Endothelial cell of umbilical vein (primary cell): ENCODE measurements at regions of chr15 and their contacts with region 1.

Region 1: DNA sequence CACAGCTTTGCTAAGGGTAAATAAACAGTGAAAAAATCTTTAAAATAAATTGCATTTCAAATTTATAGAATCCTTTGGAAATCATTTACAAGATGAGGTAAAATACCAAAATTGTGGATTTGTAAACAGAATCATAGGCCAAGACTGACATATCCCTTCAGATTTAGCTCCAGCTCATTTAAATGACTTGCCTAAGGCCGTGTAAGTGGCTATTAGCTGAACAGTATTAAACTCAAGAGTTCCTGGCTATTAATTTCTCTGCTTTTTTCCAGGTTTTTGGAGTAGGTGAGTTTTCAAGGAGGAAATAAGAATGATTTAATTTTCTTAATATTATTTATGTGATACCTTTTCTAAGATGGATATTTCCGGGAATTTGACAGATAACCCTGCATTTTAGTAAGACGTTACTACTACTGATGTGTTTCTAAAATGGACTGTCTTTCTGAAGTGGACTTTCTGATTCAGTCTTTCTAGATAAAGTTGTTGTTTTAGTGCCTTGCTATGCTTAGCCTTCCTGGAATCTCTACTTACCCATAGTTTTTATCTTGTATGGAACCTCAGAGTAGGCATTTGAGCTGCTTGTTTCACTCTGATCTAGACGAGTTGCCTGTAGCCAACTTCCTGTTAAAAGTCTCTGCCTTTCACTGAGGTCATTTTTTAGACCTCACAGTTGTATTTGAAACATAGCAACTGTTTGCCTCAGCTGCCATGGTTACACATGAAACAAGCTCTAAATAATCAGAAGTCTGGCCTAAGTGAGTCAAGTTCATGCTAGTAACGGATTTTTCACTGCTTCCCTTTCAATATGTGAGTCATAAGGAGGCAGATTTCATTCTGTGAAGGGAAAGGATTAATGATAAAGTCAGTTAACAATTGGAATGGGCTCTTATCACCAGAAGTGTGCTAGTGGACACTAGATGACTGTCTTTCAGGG is 127.0 kb downstream of the KLHL25 start:
- DNase-seq: peak; percentile 99
- H3K4me3 ChIP-seq: peak overlapping the region in 1 of 3 experiments; percentile 10
- H3K27ac ChIP-seq: peak overlapping the region; percentile 96
- H3K4me1 ChIP-seq: peaks cover 18% of the 10 kb centered on the region
- H3K27me3 ChIP-seq: no peaks in the 10 kb centered on the region
- CTCF ChIP-seq: no peak
- POLR2A ChIP-seq: no peak

Region 2: DNA sequence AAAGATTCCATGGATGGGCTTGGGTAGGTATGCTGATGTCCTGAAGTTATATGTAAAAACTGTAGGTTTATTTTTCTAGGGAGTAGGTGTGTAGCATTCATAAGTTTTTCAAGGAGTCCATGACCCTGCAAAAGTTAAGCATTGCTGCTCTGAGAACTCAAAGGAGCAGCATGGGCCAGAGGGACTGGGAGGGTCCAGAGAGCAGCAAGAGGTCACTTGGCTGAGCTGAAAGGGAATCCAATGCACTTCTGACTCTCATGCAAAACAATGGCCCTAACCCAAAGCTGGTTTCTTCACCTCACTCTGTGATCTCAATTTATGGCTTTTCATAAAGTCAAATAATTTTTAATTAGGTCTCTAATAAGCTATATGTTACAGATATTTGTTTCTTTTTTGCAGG is 1630.5 kb before region 1 on chr15:
- CTCF ChIA-PET with region 1: no interaction called
- POLR2A ChIA-PET with region 1: no interaction called
- dilution Hi-C with region 1: no loop called
- intact Hi-C with region 1: no loop called
- DNase-seq: no peak
- H3K4me3 ChIP-seq: no peak overlapping the region
- H3K27ac ChIP-seq: no peak overlapping the region
- H3K4me1 ChIP-seq: no peaks in the 10 kb centered on the region
- H3K27me3 ChIP-seq: no peaks in the 10 kb centered on the region
- CTCF ChIP-seq: no peak
- POLR2A ChIP-seq: no peak

Region 3: GRCh38 chr15:85582131-85583079 is 85.4 kb before region 1 on chr15:
- CTCF ChIA-PET with region 1: no interaction called
- POLR2A ChIA-PET with region 1: no interaction called
- dilution Hi-C with region 1: no loop called
- intact Hi-C with region 1: loop called (anchors 1 kb)
- DNase-seq: peak; percentile 98
- H3K4me3 ChIP-seq: peak overlapping the region; percentile 20 to 55 (median 33)
- H3K27ac ChIP-seq: peak overlapping the region; percentile 91
- H3K4me1 ChIP-seq: peaks cover 67% of the 10 kb centered on the region
- H3K27me3 ChIP-seq: no peaks in the 10 kb centered on the region
- CTCF ChIP-seq: no peak
- POLR2A ChIP-seq: peak; percentile 78

Region 4: DNA sequence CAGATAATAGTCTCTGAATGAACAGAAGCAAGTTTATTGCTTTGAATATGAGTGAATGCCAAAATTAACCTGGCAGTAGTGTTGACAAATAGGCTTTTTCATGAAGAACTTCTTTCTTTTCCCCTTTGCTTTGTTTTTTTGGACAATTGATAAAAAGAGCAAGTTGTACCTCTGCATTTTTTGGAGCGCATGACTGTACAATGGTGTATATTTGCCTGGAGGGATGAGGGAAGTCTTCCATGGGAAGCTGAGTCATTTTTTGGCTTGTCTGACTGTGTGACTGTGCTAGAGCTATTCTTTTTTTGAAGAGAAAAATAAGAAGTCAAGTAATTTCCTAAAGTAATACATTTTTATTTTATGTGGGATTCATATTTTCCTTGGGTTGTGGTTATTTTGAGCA is 59.9 kb before region 1 on chr15:
- CTCF ChIA-PET with region 1: interaction called, 6 read pairs
- POLR2A ChIA-PET with region 1: no interaction called
- dilution Hi-C with region 1: no loop called
- intact Hi-C with region 1: loop called (anchors 1 kb)
- DNase-seq: peak; percentile 92
- H3K4me3 ChIP-seq: peak overlapping the region in 2 of 3 experiments; percentile 28 to 55
- H3K27ac ChIP-seq: peak overlapping the region; percentile 98
- H3K4me1 ChIP-seq: peaks cover 28% of the 10 kb centered on the region
- H3K27me3 ChIP-seq: no peaks in the 10 kb centered on the region
- CTCF ChIP-seq: no peak
- POLR2A ChIP-seq: no peak

Region 5: DNA sequence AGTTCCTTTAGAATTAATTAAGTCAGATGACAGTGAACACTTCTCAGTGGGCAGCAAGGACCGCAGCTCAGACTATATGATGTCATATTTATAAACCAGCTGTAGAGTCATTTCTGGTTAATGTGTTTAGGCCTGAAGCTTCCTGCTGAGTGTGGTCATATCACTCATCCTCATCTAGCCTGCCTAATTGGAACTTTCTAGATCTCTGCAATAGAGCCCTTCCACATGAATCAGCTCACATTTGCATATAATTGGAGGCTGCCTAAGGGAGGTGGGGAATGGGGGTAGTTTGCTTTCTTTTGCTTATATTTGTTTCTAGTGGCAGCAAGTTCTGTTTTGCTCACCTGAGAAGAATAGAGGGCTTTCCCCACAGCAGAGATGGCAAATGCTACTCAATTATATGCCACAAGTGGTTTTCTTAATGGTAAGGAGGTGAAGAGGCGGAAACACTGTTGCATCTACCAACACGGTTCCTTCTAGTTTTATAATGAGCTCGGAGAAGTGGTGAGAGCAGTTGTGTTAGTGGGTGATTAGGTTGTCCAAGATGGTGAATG is 21.1 kb before region 1 on chr15:
- CTCF ChIA-PET with region 1: interaction called, 10 read pairs
- POLR2A ChIA-PET with region 1: no interaction called
- dilution Hi-C with region 1: no loop called
- intact Hi-C with region 1: no loop called
- DNase-seq: peak; percentile 12
- H3K4me3 ChIP-seq: no peak overlapping the region
- H3K27ac ChIP-seq: no peak overlapping the region
- H3K4me1 ChIP-seq: peaks cover 13% of the 10 kb centered on the region
- H3K27me3 ChIP-seq: no peaks in the 10 kb centered on the region
- CTCF ChIP-seq: no peak
- POLR2A ChIP-seq: no peak

Region 6: GRCh38 chr15:85702321-85703101 is 34.8 kb after region 1 on chr15:
- CTCF ChIA-PET with region 1: no interaction called
- POLR2A ChIA-PET with region 1: no interaction called
- dilution Hi-C with region 1: no loop called
- intact Hi-C with region 1: loop called (anchors 1 kb)
- DNase-seq: peak; percentile 81
- H3K4me3 ChIP-seq: no peak overlapping the region
- H3K27ac ChIP-seq: peak overlapping the region; percentile 79
- H3K4me1 ChIP-seq: peaks cover 24% of the 10 kb centered on the region
- H3K27me3 ChIP-seq: no peaks in the 10 kb centered on the region
- CTCF ChIP-seq: no peak
- POLR2A ChIP-seq: no peak

Region 7: DNA sequence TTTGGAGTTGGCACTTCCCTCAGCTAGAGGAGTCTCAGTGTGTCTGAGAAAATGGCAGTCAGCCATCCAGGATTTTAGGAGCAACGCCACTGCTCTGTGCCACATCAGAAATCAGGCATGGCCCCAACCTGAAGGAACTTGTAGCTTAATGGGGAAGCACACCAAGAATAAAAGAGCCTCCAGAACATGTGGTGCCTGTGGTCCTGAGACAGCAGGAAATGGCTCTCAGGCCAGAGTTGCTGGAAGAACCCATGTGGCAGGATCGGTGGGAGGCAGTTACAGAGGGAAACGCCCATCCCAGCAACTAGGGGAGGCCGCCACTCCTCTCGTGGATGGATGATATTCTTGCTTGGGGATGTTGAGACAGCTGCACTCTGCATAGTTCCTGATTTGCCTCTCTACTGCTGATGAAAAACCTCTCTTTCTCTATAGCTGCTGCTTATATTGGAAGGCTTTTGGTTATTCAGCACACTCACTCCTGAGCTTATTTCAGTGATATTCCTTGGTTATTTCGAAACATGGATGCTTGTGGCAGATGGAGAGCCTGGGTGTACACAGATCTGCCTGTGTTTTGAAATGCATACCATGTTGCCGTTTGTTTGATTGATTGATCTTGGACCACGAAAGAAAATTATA is 74.5 kb after region 1 on chr15:
- CTCF ChIA-PET with region 1: no interaction called
- POLR2A ChIA-PET with region 1: no interaction called
- dilution Hi-C with region 1: no loop called
- intact Hi-C with region 1: no loop called
- DNase-seq: no peak
- H3K4me3 ChIP-seq: no peak overlapping the region
- H3K27ac ChIP-seq: no peak overlapping the region
- H3K4me1 ChIP-seq: no peaks in the 10 kb centered on the region
- H3K27me3 ChIP-seq: no peaks in the 10 kb centered on the region
- CTCF ChIP-seq: no peak
- POLR2A ChIP-seq: no peak

Region 8: GRCh38 chr15:86106306-86106705 is 438.5 kb after region 1 on chr15:
- CTCF ChIA-PET with region 1: no interaction called
- POLR2A ChIA-PET with region 1: no interaction called
- dilution Hi-C with region 1: no loop called
- intact Hi-C with region 1: no loop called
- DNase-seq: no peak
- H3K4me3 ChIP-seq: no peak overlapping the region
- H3K27ac ChIP-seq: no peak overlapping the region
- H3K4me1 ChIP-seq: no peaks in the 10 kb centered on the region
- H3K27me3 ChIP-seq: no peaks in the 10 kb centered on the region
- CTCF ChIP-seq: no peak
- POLR2A ChIP-seq: no peak